Adrenal gland (tissue), 19 donors: ENCODE measurements at regions of chr18 and their contacts with region 1.

Region 1: GRCh38 chr18:27022463-27022862 is 157.0 kb upstream of the AQP4 start:
- DNase-seq: no peak
- H3K4me3 ChIP-seq: no peak overlapping the region
- H3K27ac ChIP-seq: no peak overlapping the region
- H3K4me1 ChIP-seq: no peaks in the 10 kb centered on the region
- H3K27me3 ChIP-seq: no peaks in the 10 kb centered on the region
- CTCF ChIP-seq: no peak
- POLR2A ChIP-seq: no peak

Region 2: DNA sequence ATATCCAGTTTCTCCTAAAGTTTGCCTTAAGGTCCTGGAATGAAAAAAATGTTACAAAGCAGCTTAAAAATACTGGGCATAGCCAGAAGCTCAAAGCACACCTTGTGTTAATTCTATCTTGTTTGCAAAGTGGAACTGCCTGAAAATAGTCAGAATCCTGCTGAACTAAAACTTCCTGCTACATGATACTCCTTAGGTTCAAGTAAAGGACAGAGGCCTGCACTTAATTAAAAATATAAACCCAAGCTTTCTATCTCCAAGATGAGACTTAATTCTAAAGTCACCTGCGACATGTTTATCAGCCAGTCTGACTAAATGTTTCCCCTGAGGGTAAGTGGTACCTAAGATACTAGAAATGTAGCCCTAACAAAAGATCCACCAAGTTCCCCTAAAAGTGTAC is 59.2 kb after region 1 on chr18:
- intact Hi-C with region 1: no loop called
- DNase-seq: no peak
- H3K4me3 ChIP-seq: no peak overlapping the region
- H3K27ac ChIP-seq: no peak overlapping the region
- H3K4me1 ChIP-seq: no peaks in the 10 kb centered on the region
- H3K27me3 ChIP-seq: no peaks in the 10 kb centered on the region
- CTCF ChIP-seq: no peak
- POLR2A ChIP-seq: no peak

Region 3: GRCh38 chr18:27164905-27165304 is 142.4 kb after region 1 on chr18:
- intact Hi-C with region 1: loop called in 1 of 2 experiments (anchors 10 kb)
- DNase-seq: no peak
- H3K4me3 ChIP-seq: no peak overlapping the region
- H3K27ac ChIP-seq: no peak overlapping the region
- H3K4me1 ChIP-seq: no peaks in the 10 kb centered on the region
- H3K27me3 ChIP-seq: no peaks in the 10 kb centered on the region
- CTCF ChIP-seq: no peak
- POLR2A ChIP-seq: no peak

Region 4: GRCh38 chr18:27298214-27298804 is 275.8 kb after region 1 on chr18:
- intact Hi-C with region 1: loop called in 1 of 2 experiments (anchors 10 kb)
- DNase-seq: no peak
- H3K4me3 ChIP-seq: no peak overlapping the region
- H3K27ac ChIP-seq: no peak overlapping the region
- H3K4me1 ChIP-seq: no peaks in the 10 kb centered on the region
- H3K27me3 ChIP-seq: no peaks in the 10 kb centered on the region
- CTCF ChIP-seq: peak in 3 of 6 experiments; percentile 12 to 32 (median 20)
- POLR2A ChIP-seq: no peak